WTC11 (cell line): ENCODE measurements at regions of chr19 and their contacts with region 1.

Region 1: DNA sequence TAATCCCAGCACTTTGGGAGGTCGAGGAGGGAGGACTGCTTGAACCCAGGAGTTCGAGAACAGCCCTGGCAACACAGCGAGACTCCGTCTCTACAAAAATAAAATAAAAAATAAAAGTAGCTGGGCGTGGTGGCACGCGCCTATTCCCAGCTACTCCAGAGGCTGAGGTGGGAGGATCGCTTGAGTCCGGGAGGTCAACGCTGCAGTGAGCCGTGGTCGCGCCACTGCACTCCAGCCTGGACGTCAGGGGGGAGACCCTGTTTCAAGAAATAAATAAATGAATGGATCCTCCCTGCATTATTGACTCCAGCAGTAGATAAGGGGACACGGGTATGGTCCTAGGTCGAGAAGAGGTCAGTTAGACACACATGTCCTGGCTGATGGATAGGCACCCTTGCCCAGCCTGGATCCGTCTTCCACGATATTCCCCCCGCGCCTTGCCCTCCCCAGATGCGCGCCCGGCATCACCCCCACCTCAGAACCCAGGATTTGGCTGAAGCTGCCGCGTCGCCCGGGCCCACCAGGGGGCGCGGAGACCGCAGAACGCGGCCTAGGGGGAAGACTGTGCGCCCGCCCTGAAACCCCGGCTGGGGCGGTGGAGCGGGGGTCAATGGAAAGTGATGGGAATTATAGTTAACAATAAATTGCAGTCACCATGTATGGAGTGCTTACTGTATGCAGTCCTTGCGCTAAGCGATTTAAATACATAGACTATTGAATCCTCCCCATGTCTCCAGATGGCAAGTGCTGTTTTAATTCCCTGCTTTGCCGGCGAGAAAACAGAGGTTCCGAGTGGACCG is 2.1 kb upstream of the HOOK2 start:
- DNase-seq: peak; percentile 91
- ATAC-seq: peak; percentile 39
- H3K4me3 Mint-ChIP-seq: peak overlapping the region; percentile 79
- H3K27ac Mint-ChIP-seq: peak overlapping the region; percentile 49
- H3K4me1 Mint-ChIP-seq: peaks cover 21% of the 10 kb centered on the region
- H3K27me3 Mint-ChIP-seq: no peaks in the 10 kb centered on the region; the same call in 1 of the 2 replicates
- CTCF ChIP-seq: peak; percentile 74

Region 2: GRCh38 chr19:12731337-12731736 is 46.1 kb before region 1 on chr19:
- CTCF ChIA-PET with region 1: no interaction called
- POLR2A ChIA-PET with region 1: no interaction called
- DNase-seq: no peak
- ATAC-seq: no peak
- H3K4me3 Mint-ChIP-seq: no peak overlapping the region
- H3K27ac Mint-ChIP-seq: no peak overlapping the region; the same call in 1 of the 2 replicates
- H3K4me1 Mint-ChIP-seq: peaks cover 23% of the 10 kb centered on the region
- H3K27me3 Mint-ChIP-seq: no peaks in the 10 kb centered on the region
- CTCF ChIP-seq: no peak

Region 3: GRCh38 chr19:12789904-12790619 is 12.6 kb after region 1 on chr19:
- CTCF ChIA-PET with region 1: interaction called, 136 read pairs
- POLR2A ChIA-PET with region 1: interaction called, 29 read pairs
- DNase-seq: peak; percentile 98
- ATAC-seq: peak; percentile 63
- H3K4me3 Mint-ChIP-seq: peak overlapping the region; percentile 84
- H3K27ac Mint-ChIP-seq: peak overlapping the region; percentile 79; the same call in 1 of the 2 replicates
- H3K4me1 Mint-ChIP-seq: peaks cover 29% of the 10 kb centered on the region
- H3K27me3 Mint-ChIP-seq: peaks cover 32% of the 10 kb centered on the region
- CTCF ChIP-seq: no peak

Region 4: GRCh38 chr19:12796146-12797071 is 19.0 kb after region 1 on chr19:
- CTCF ChIA-PET with region 1: interaction called, 136 read pairs
- POLR2A ChIA-PET with region 1: interaction called, 29 read pairs
- DNase-seq: peak; percentile 86
- ATAC-seq: peak; percentile 67
- H3K4me3 Mint-ChIP-seq: peak overlapping the region; percentile 43; the same call in 1 of the 2 replicates
- H3K27ac Mint-ChIP-seq: peak overlapping the region; percentile 96
- H3K4me1 Mint-ChIP-seq: peaks cover 26% of the 10 kb centered on the region
- H3K27me3 Mint-ChIP-seq: peaks cover 25% of the 10 kb centered on the region
- CTCF ChIP-seq: peak; percentile 84